ENCODE measurements at regions of chr15 and their contacts with region 1.

Region 1: GRCh38 chr15:72599855-72600464 is 54.5 kb upstream of the GOLGA6B start:
- DNase-seq: peak; percentile 47
- ATAC-seq: peak; percentile 86
- H3K4me3 ChIP-seq: no peak overlapping the region
- H3K27ac ChIP-seq: no peak overlapping the region
- H3K4me1 ChIP-seq: no peaks in the 10 kb centered on the region
- H3K27me3 ChIP-seq: no peaks in the 10 kb centered on the region
- CTCF ChIP-seq: peak; percentile 61 to 72 (median 63); a peak in 5 of 6 replicates
- POLR2A ChIP-seq: no peak
- RAD21 ChIP-seq: peak; percentile 64

Region 2: DNA sequence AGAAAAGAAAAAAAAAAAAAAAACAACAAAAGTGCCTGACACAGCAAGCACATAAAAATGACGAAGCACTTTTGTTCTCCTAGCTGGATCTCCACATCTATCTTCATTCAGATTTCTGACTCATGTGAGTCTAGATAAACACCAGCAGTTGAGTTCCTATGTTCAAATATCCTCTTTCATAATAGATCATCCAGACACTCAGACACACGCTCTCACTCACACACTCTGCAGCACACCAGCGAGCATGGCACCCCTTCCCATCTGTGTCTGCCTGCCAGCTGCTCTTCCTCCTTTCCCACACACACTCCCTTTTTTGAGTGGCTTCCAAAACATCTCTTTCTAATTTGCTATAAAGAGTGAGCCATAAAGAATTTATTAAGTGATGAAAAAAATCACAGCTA is 260.2 kb before region 1 on chr15:
- CTCF ChIA-PET with region 1: interaction called, 7 read pairs
- POLR2A ChIA-PET with region 1: no interaction called
- RAD21 ChIA-PET with region 1: no interaction called
- intact Hi-C with region 1: loop called (anchors 5 kb)
- DNase-seq: no peak
- ATAC-seq: no peak
- H3K4me3 ChIP-seq: no peak overlapping the region
- H3K27ac ChIP-seq: no peak overlapping the region
- H3K4me1 ChIP-seq: peaks cover 0 to 3% of the 10 kb centered on the region in 2 experiments; a peak in 1 of 4 replicates
- H3K27me3 ChIP-seq: no peaks in the 10 kb centered on the region
- CTCF ChIP-seq: no peak
- POLR2A ChIP-seq: no peak
- RAD21 ChIP-seq: no peak

Region 3: GRCh38 chr15:72585476-72586082 is 14.4 kb before region 1 on chr15:
- CTCF ChIA-PET with region 1: interaction called, 42 read pairs
- POLR2A ChIA-PET with region 1: interaction called, 3 read pairs
- RAD21 ChIA-PET with region 1: no interaction called
- intact Hi-C with region 1: no loop called
- DNase-seq: no peak
- ATAC-seq: peak; percentile 71
- H3K4me3 ChIP-seq: no peak overlapping the region
- H3K27ac ChIP-seq: no peak overlapping the region
- H3K4me1 ChIP-seq: no peaks in the 10 kb centered on the region
- H3K27me3 ChIP-seq: no peaks in the 10 kb centered on the region
- CTCF ChIP-seq: peak; percentile 14 to 49 (median 33); a peak in 4 of 6 replicates
- POLR2A ChIP-seq: no peak
- RAD21 ChIP-seq: peak; percentile 36

Region 4: DNA sequence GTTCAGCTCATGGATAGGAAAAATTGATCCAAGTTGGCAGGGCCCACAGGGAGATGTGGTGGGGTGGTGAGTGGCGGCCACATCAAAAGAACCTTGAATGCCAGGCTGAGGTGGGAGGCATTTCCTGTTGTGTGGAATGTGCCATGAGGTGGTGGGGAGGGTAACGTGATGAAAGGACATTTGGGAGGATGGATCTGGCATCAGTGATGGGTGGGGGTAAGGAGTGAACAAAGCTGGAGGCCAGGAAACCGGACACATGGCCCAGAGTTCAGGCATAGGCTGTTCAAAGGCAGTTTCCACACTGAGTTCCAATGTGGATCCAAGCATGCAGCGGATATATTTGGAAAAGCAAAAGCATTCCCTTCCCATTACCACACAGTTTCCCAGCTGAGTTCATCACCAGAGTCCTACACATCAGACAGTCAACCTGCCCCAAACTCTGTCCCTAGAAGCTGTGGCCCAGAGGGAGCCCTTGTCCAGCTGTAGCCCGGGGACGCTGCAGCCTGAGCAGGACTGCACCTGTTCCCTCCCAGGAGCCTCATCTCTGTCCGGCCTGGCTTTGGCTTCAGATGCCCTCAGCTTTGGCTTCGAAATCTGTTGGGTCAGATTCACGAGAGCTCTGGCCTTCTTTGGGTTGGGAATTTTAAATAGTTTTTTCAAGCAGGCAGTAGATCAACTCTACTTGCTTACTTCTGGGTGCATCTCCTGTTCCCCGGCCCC is 16.7 kb after region 1 on chr15:
- CTCF ChIA-PET with region 1: no interaction called
- POLR2A ChIA-PET with region 1: no interaction called
- RAD21 ChIA-PET with region 1: no interaction called
- intact Hi-C with region 1: no loop called
- DNase-seq: no peak
- ATAC-seq: peak; percentile 27; the same call in 1 of the 2 replicates
- H3K4me3 ChIP-seq: no peak overlapping the region
- H3K27ac ChIP-seq: no peak overlapping the region
- H3K4me1 ChIP-seq: peaks cover 4 to 7% of the 10 kb centered on the region in 2 experiments; a peak in 3 of 4 replicates
- H3K27me3 ChIP-seq: no peaks in the 10 kb centered on the region
- CTCF ChIP-seq: no peak
- POLR2A ChIP-seq: no peak
- RAD21 ChIP-seq: no peak

Region 5: GRCh38 chr15:72671535-72671934 is 71.6 kb after region 1 on chr15:
- CTCF ChIA-PET with region 1: interaction called, 28 read pairs
- POLR2A ChIA-PET with region 1: no interaction called
- RAD21 ChIA-PET with region 1: interaction called in 1 of 2 experiments, 6 read pairs
- intact Hi-C with region 1: no loop called
- DNase-seq: no peak
- ATAC-seq: no peak
- H3K4me3 ChIP-seq: no peak overlapping the region
- H3K27ac ChIP-seq: peak overlapping the region; percentile 3; the same call in 1 of the 2 replicates
- H3K4me1 ChIP-seq: peaks cover 7 to 9% of the 10 kb centered on the region in 2 experiments; a peak in 3 of 4 replicates
- H3K27me3 ChIP-seq: no peaks in the 10 kb centered on the region
- CTCF ChIP-seq: no peak
- POLR2A ChIP-seq: no peak
- RAD21 ChIP-seq: no peak

Region 6: DNA sequence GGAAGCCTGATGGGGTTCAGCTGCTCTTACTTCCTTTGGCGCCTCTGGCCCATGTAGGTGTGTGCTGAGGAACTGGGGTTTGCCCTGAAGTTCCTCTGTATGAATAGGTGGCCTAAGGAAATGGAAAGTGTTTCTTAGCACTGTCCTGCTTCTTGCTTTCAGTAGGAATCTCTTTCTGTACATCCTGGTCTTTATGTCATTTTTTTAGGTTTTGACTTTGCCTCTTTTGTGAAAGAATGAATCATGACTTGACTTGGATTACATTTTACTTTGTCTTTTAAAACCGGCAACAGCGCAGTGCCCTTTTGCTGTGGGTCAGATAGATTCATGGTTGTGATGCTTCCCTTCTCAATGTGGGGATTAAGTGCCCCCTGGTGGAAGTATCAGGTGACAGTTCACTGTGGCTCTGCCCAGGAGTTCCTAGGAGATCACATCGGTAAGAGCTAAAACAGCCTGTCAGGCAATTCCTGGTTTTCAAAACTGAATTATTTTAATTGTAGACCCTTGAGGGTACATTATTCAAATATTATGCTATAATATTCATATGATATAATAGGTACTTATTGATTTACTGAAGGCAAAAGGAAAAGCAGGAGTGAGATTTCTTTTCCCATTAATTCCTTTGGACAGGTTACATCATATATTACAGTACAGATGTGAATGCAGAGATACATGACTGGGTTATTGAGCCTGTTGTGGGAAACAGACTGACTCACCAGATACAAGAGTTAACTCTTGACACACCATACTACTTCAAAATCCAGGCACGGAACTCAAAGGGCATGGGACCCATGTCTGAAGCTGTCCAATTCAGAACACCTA is 673.4 kb after region 1 on chr15:
- CTCF ChIA-PET with region 1: interaction called, 6 read pairs
- POLR2A ChIA-PET with region 1: no interaction called
- RAD21 ChIA-PET with region 1: no interaction called
- intact Hi-C with region 1: loop called (anchors 2 kb)
- DNase-seq: peak; percentile 15
- ATAC-seq: peak; percentile 97
- H3K4me3 ChIP-seq: no peak overlapping the region
- H3K27ac ChIP-seq: no peak overlapping the region
- H3K4me1 ChIP-seq: no peaks in the 10 kb centered on the region
- H3K27me3 ChIP-seq: no peaks in the 10 kb centered on the region
- CTCF ChIP-seq: peak; percentile 53 to 86 (median 85); a peak in 5 of 6 replicates
- POLR2A ChIP-seq: no peak
- RAD21 ChIP-seq: peak; percentile 66

Measured in HCT116 (cell line).